ENCODE measurements at regions of chr17 and their contacts with region 1.

Region 1: GRCh38 chr17:50865984-50866774 is at the start of gene TOB1:
- DNase-seq: peak; percentile 100
- H3K4me3 ChIP-seq: peak within 1 kb of the TSS; percentile 82 to 99 (median 98)
- H3K27ac ChIP-seq: peak within 1 kb of the TSS; percentile 99 to 100 (median 100)
- H3K4me1 ChIP-seq: peaks cover 19 to 52% (median 45%) of the 10 kb centered on the region in 4 donors
- H3K27me3 ChIP-seq: no peaks in the 10 kb centered on the region
- CTCF ChIP-seq: peak in 1 of 3 experiments; percentile 12
- EP300 ChIP-seq: peak; percentile 42
- POLR2A ChIP-seq: peak; percentile 100
- total RNA-seq, gene TOB1: 26.7 to 34.4 (median 31.0) TPM

Region 2: GRCh38 chr17:50904521-50905459 is 38.6 kb after region 1 on chr17:
- intact Hi-C with region 1: loop called (anchors 2 kb)
- DNase-seq: no peak
- H3K4me3 ChIP-seq: peak overlapping the region in 1 of 4 donors; percentile 6
- H3K27ac ChIP-seq: peak overlapping the region; percentile 89 to 98 (median 95)
- H3K4me1 ChIP-seq: peaks cover 38 to 63% (median 59%) of the 10 kb centered on the region in 4 donors
- H3K27me3 ChIP-seq: no peaks in the 10 kb centered on the region
- CTCF ChIP-seq: peak in 1 of 3 experiments; percentile 18
- EP300 ChIP-seq: no peak
- POLR2A ChIP-seq: no peak

Region 3: GRCh38 chr17:50919321-50920085 is 53.3 kb after region 1 on chr17:
- intact Hi-C with region 1: no loop called
- DNase-seq: peak; percentile 95
- H3K4me3 ChIP-seq: no peak overlapping the region
- H3K27ac ChIP-seq: peak overlapping the region; percentile 81 to 87 (median 86)
- H3K4me1 ChIP-seq: peaks cover 34 to 71% (median 68%) of the 10 kb centered on the region in 4 donors
- H3K27me3 ChIP-seq: no peaks in the 10 kb centered on the region
- CTCF ChIP-seq: no peak
- EP300 ChIP-seq: no peak
- POLR2A ChIP-seq: no peak

Region 4: DNA sequence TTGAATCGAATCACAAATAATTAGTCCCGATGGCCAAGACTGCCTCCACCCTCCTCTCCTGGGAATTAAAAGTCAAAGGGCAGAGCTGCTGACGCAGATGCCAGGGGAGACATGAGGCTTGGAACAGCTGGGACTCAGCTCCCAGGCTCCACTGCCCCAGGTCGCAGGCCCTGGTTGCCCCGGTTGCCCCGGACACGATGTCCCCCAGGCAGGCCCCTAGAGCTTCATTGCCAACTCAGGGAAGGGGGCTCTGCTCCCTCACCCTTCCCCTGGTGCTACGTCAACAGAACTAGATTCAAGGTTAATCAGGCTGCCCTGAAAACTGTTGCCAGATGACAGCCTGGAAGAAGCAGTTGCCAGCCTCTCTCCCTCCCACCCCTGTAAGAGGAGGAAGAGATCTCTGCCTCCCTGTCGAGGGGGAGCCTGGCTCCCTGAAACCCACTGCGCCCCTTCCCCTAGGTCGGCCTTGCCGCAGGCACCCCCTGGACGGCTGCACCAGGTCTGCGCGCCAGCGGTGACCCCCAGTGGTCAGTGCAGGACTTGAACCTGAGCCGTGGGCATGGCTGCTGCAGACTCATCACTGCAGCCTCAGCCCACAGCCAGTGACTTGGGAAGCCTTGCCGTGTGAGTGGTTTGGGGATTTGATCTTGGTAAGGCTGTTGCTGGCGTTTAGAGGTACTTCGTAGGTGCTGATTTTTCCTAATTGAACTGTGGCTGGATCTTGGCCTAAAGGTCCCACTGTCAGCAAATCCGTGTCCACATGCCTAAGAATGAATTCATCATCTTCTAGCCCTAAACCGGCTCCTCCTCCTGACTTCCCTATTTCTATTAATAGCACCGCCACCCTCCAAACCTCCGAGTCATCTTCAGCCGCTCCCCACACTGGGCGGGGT is 84.1 kb after region 1 on chr17:
- intact Hi-C with region 1: loop called (anchors 1 kb)
- DNase-seq: peak; percentile 96
- H3K4me3 ChIP-seq: peak overlapping the region; percentile 8 to 40 (median 18)
- H3K27ac ChIP-seq: peak overlapping the region; percentile 89 to 90 (median 90)
- H3K4me1 ChIP-seq: peaks cover 47 to 73% (median 68%) of the 10 kb centered on the region in 4 donors
- H3K27me3 ChIP-seq: no peaks in the 10 kb centered on the region
- CTCF ChIP-seq: peak; percentile 79 to 89 (median 87)
- EP300 ChIP-seq: peak; percentile 24
- POLR2A ChIP-seq: no peak

Region 5: DNA sequence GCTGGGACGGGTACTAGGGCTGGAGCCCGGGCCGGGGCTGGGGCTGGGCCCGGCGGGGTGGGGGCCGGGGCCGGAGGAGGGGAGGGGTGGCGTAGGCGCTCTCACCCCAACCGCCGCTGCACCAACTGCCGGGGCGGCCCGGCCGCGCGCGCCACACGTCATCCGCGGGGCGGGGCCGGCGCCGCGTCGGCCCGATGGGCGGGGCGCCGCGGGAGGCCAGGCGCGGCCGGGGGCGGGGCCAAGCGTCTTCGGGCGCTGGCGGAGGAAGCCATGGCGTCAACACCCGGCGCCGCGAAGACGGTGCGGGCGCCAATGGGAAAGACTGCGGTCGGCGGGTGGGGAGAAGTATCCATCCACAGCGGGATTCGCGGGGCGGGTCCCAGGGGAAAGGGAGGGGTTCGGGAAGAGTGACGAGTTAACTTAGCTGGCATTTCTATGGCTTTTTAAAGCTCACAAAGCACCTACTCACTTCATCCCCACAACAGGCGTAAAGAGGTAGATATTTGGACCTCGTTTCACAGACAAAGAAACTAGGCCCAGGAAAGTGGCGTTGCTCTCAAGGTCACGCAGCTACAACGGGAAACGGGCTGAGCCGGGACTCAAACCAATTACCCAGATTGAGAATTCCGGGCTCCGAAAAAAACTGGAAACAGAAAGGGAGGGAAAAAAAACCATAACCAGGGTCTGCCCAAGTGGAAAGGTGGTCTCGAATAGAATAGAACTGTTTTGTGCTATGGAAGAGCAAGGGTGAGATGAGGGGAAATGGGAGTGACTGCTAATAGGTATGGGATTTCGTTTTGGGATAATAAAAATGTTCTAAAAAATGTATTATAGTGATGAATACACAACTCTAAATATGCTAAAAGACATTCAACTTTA is 254.8 kb after region 1 on chr17 and contains the start of gene SPAG9:
- intact Hi-C with region 1: loop called (anchors 10 kb)
- DNase-seq: peak; percentile 98
- H3K4me3 ChIP-seq: peak within 1 kb of the TSS; percentile 95 to 100 (median 98)
- H3K27ac ChIP-seq: peak within 1 kb of the TSS; percentile 99 to 100 (median 100)
- H3K4me1 ChIP-seq: peaks cover 23 to 50% (median 45%) of the 10 kb centered on the region in 4 donors
- H3K27me3 ChIP-seq: no peaks in the 10 kb centered on the region
- CTCF ChIP-seq: no peak
- EP300 ChIP-seq: no peak
- POLR2A ChIP-seq: peak; percentile 57
- total RNA-seq, gene SPAG9: 81.2 to 99.9 (median 89.9) TPM

Measured in esophagus muscularis mucosa (tissue), 4 donors.